Prostate gland (tissue), 2 donors: ENCODE measurements at regions of chr19 and their contacts with region 1.

Region 1: DNA sequence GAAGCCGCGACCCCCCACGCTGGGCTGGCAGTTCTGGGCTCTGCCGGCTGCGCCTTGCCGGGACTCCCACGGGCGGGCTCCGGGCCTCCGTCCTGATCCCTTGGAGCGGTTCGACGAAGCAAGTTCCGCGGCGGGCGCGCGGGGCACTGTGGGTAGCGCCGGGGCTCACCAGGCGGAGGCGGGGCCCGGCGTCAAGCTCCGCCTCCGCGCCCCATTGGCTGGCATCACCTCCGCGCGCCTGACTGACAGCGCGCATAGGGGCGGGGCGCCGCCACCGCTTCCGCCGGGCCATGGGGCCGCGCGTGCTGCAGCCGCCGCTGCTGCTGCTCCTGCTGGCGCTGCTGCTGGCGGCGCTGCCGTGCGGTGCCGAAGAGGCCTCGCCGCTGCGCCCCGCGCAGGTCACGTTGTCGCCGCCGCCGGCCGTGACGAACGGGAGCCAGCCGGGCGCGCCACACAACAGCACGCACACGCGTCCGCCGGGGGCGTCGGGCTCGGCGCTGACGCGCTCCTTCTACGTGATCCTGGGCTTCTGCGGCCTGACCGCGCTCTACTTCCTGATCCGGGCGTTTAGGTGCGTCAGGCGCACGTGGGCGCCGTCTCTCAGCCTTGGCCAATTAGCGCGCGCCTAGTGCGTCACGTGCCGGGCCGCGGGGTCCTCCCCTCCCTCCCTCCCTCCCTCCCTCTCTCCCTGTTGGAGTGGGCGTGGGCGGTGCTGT is at the start of gene FAM174C:
- DNase-seq: peak; percentile 94
- H3K4me3 ChIP-seq: peak within 1 kb of the TSS; percentile 53 to 78
- H3K27ac ChIP-seq: peak within 1 kb of the TSS; percentile 94 to 99
- H3K4me1 ChIP-seq: peaks cover 51% of the 10 kb centered on the region
- H3K27me3 ChIP-seq: no peaks in the 10 kb centered on the region
- CTCF ChIP-seq: peak in 2 of 4 experiments; percentile 12 to 25
- POLR2A ChIP-seq: peak; percentile 41
- total RNA-seq, gene FAM174C: 95.1 to 98.7 TPM

Region 2: DNA sequence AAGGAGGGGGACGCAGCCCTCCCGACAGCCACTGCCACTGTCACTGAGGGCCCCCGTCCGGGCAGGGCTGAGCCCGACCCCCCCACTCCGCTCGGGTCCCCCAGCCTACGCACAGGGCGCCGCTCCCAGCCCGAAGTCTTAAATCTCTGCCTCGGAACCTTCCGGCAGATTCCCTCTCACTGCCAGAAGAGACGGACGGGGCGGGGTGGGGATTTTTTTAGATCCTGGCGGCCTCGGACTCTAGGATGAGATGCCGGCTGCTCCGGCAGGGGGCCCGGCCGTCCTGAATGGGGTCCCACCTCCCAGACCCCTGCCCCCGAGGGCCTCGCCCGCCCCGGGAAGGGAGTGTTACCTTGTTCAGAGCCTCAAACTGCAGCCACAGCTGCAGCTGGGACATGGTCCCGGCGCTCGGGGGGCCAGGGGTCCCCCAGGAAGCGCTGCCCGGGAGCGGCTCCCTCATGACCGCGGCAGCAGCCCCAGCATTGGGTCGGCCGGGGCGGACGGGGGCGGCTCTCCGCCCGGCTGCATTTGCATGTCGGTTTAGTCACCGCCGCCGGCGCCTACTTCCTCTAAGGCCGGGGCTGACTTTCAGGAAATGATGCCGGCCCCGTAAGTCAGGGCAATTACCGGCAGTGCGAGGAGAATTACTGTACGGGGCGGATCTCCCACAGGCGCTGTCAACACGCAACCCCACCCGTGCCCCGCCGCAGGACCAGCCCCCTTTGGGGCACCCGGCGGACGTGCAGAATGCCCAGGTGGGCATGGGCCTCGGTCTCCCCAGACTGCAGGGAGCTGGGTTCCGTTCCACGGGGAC is 143.5 kb before region 1 on chr19:
- intact Hi-C with region 1: no loop called
- DNase-seq: peak; percentile 83
- H3K4me3 ChIP-seq: peak overlapping the region; percentile 39 to 54
- H3K27ac ChIP-seq: peak overlapping the region; percentile 83 to 89
- H3K4me1 ChIP-seq: peaks cover 29% of the 10 kb centered on the region
- H3K27me3 ChIP-seq: no peaks in the 10 kb centered on the region
- CTCF ChIP-seq: peak in 2 of 4 experiments; percentile 5 to 12
- POLR2A ChIP-seq: peak; percentile 82

Region 3: DNA sequence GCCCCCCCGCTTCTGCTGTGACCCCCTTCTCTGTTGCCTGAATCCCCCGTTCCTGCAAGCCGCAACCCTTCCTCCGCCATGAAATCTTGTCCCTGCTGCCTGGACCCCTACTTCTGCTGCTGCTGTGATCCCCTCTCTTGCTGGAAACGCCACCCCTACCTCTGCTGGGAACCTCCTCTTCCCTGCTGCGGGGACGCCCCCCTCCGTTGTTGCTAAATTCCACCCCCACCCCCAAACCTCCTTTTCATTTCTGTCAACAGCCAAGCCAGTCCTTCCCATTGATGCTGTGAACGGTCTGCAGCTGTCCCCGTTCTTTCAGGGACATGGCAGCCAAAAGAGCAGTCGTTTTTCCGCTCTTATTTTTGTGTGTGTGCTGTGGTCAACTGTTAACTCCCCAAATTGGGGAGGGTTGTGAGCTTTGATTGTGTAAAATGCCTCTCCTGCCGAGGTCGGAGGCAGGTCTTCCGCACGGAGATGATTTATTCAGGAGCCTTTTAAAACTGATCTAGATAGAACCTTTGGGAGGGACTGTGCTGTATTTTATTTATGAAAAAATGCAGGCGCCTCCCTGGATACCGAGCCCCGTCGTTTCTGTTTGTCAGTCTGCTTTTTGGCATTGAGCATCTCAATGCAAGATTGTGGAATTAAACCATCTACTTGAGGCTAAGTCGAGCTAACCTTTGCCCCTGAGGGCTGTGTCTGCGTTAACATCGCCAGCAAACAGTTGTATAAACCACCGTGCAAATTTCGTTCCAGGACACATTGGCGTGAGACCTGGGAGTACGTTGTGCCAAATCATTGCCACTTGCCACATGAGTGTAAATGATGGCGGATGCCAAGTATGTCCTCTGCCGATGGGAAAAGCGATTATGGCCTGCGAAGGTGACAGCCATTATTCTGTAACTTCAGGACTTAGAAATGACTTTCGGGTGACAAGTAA is 80.4 kb after region 1 on chr19:
- intact Hi-C with region 1: loop called (anchors 5 kb)
- DNase-seq: no peak
- H3K4me3 ChIP-seq: peak overlapping the region; percentile 86 to 96
- H3K27ac ChIP-seq: peak overlapping the region; percentile 92 to 97
- H3K4me1 ChIP-seq: peaks cover 16% of the 10 kb centered on the region
- H3K27me3 ChIP-seq: no peaks in the 10 kb centered on the region
- CTCF ChIP-seq: no peak
- POLR2A ChIP-seq: no peak

Region 4: GRCh38 chr19:1406774-1407499 is 131.5 kb after region 1 on chr19:
- intact Hi-C with region 1: loop called (anchors 10 kb)
- DNase-seq: peak; percentile 99
- H3K4me3 ChIP-seq: peak overlapping the region; percentile 47 to 95
- H3K27ac ChIP-seq: peak overlapping the region; percentile 90 to 96
- H3K4me1 ChIP-seq: peaks cover 34% of the 10 kb centered on the region
- H3K27me3 ChIP-seq: no peaks in the 10 kb centered on the region
- CTCF ChIP-seq: peak in 3 of 4 experiments; percentile 44 to 50 (median 48)
- POLR2A ChIP-seq: peak; percentile 54

Region 5: DNA sequence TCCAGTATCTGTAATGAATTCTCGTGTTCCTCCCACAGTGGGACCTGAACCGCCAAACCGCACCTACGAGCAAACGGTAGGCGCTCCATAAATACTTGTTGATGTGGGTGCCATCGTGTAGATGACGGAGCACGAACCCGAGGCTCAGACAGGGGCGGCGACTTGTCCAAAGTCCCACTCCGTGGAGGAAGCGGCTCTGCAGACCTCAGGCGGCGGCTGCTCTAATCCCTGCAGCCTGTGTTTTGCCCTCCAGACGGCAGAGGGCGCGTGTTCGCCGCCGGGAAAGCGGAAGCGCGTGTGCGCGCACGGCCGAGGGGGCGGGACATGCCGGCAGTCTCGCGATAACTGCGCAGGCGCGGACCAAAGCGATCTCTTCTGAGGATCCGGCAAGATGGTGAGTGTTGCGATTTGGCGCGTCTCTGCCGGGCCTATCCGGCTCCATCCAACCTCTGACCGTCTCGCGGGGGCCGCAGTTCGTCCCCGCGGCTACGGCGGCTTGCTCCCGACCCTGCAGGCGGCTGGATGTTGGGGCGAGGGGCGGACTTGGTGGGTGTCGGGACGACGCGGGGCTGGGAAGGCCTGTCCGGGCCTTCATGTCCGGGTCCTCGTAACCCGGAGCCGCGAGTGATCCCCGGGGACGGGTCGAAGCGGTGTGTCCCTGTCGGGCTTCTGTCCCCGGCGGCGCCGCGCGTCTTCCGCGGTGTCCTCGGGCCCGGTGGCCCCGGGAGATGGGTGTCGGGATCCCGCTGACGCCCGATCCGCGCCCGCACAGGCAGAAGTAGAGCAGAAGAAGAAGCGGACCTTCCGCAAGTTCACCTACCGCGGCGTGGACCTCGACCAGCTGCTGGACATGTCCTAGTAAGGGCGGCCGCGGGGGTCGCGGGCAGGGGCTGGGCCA is 162.9 kb after region 1 on chr19 and contains the start of gene RPS15:
- intact Hi-C with region 1: loop called (anchors 5 kb)
- DNase-seq: peak; percentile 92
- H3K4me3 ChIP-seq: peak within 1 kb of the TSS; percentile 71 to 88
- H3K27ac ChIP-seq: peak within 1 kb of the TSS; percentile 73 to 81
- H3K4me1 ChIP-seq: peaks cover 14% of the 10 kb centered on the region
- H3K27me3 ChIP-seq: no peaks in the 10 kb centered on the region
- CTCF ChIP-seq: peak; percentile 95 to 99 (median 98)
- POLR2A ChIP-seq: peak; percentile 84
- total RNA-seq, gene RPS15: 3,102 to 5,853 TPM

Region 6: DNA sequence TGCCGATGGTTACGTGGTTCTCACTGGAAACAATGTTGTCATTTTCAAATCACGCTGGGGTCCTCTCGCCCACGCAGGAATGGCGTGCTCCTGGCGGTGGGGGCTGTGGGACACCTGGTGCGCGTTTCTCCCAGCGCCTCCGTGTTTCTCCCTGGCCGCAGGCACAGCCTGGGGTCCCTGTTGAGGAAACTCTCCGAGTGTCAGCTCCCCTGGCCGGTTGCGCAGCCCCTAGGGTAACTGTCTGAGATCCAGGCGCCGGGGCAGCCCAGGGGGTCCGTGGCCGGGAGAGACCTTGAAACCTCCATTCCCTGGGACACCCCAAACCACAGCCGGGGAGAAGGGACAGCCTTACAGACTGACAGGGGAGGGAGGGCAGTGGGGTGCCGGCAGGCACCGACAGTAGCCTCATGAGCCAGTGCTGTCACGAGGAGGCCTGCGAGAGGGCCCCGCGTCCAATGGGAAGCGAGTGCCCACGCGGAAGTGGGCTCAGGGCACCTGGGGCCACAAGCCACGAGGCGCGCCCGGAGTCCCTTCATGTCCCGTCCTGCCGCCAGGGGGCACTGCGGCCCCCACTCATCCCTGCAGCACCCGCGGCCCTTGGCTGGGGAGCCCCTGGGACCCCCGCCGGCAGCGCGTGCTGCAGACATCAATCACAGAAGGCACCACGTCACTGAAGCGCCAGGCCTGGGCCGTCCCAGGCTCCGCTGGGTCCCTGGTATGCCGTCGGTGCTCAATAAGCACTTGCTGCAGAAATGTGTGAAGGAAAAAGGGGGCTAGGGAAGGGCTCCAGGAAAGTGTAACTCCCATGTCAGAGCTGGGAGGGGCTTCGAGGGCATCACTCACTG is 227.9 kb after region 1 on chr19:
- intact Hi-C with region 1: loop called (anchors 5 kb)
- DNase-seq: no peak
- H3K4me3 ChIP-seq: no peak overlapping the region
- H3K27ac ChIP-seq: no peak overlapping the region
- H3K4me1 ChIP-seq: no peaks in the 10 kb centered on the region
- H3K27me3 ChIP-seq: peaks cover 14% of the 10 kb centered on the region
- CTCF ChIP-seq: peak; percentile 40 to 70 (median 43)
- POLR2A ChIP-seq: peak; percentile 10